ENCODE measurements at regions of chr11 and their contacts with region 1.

Region 1: DNA sequence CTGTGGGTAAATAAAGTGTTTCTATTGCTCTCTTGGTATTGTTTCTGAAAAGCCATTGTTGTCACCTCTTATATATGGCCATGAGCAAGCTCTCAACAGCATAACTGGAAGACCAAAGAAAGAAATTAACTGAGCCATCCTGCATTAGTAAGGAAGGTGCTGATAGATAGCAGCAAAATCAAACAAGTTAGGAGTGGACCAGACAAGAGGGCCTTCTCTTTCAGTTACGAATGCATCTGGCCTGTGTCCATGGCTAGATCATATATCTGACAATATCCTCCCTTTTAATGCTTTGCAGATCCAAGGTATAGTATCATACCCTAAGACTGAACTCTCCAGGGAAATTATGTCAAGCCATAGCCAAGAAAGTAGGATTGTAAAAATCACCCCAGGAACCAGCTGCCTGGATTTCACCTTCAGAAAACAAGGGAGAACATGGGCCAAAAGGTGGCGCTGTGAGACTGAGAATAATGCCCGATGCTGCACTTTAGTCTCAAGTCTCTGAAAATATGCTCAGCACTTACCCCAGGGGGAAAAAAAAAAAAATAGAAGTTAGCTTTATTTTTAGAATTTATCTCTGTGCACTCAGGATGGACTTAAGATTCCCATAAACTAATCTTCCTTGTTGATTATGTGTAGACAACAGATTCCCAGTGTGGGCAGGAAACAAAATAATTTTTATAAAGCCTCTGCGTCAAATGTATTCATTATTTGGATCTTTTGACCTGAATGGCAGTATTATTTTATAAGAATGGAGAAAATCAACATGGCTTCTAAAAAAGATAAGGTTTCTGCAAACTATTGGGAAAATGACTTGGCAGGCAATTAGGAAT is 415.1 kb downstream of the ETS1 start:
- DNase-seq: peak; percentile 14 to 73 (median 30)
- ATAC-seq: peak; percentile 88
- H3K4me3 ChIP-seq: no peak overlapping the region
- H3K27ac ChIP-seq: no peak overlapping the region
- H3K4me1 ChIP-seq: no peaks in the 10 kb centered on the region
- H3K27me3 ChIP-seq: no peaks in the 10 kb centered on the region
- CTCF ChIP-seq: peak; percentile 65 to 81 (median 66)
- EP300 ChIP-seq: no peak
- POLR2A ChIP-seq: no peak
- RAD21 ChIP-seq: peak; percentile 75 to 76

Region 2: GRCh38 chr11:127962416-127962815 is 209.8 kb before region 1 on chr11:
- CTCF ChIA-PET with region 1: no interaction called
- POLR2A ChIA-PET with region 1: no interaction called
- in situ Hi-C with region 1: no loop called
- intact Hi-C with region 1: no loop called
- DNase-seq: no peak
- ATAC-seq: no peak
- H3K4me3 ChIP-seq: no peak overlapping the region
- H3K27ac ChIP-seq: no peak overlapping the region
- H3K4me1 ChIP-seq: no peaks in the 10 kb centered on the region
- H3K27me3 ChIP-seq: no peaks in the 10 kb centered on the region
- CTCF ChIP-seq: no peak
- EP300 ChIP-seq: no peak
- POLR2A ChIP-seq: no peak
- RAD21 ChIP-seq: no peak

Region 3: GRCh38 chr11:128052912-128053641 is 119.2 kb before region 1 on chr11:
- CTCF ChIA-PET with region 1: no interaction called
- POLR2A ChIA-PET with region 1: no interaction called
- in situ Hi-C with region 1: no loop called
- intact Hi-C with region 1: no loop called
- DNase-seq: no peak
- ATAC-seq: no peak
- H3K4me3 ChIP-seq: no peak overlapping the region
- H3K27ac ChIP-seq: no peak overlapping the region
- H3K4me1 ChIP-seq: no peaks in the 10 kb centered on the region
- H3K27me3 ChIP-seq: no peaks in the 10 kb centered on the region
- CTCF ChIP-seq: no peak
- EP300 ChIP-seq: no peak
- POLR2A ChIP-seq: no peak
- RAD21 ChIP-seq: no peak

Region 4: DNA sequence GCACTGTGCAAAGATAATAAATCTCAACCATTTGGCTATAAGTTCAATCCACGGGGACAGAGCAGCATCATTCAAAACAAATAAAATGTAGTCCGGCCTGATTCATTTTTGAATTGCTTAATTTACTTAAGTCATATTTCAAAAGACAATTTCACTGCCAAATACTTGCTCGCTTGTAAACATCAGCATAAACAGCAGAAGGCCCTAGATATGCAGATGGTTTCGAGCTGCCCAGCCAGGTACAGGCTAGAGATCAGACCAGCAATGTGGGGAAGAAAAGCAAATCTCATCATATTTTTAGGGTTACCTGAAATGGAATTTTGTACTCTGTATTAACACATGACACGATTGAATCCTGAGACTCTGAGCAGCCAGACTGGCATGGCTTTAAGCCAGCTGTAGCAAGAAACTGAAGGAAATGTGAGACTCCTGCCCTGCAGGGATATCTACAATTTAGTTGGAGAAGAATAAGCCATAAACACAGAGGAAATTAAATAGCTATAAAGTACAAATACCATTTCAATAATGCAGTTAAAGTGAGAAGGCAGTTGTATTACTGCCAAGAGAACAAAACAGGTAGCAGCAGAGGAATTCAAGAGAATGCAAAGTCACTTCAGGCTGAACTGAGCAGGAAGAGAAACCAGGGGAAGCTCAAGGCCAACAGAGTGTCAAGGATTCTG is 25.2 kb before region 1 on chr11:
- CTCF ChIA-PET with region 1: no interaction called
- POLR2A ChIA-PET with region 1: no interaction called
- in situ Hi-C with region 1: no loop called
- intact Hi-C with region 1: no loop called
- DNase-seq: no peak
- ATAC-seq: no peak
- H3K4me3 ChIP-seq: no peak overlapping the region
- H3K27ac ChIP-seq: no peak overlapping the region
- H3K4me1 ChIP-seq: no peaks in the 10 kb centered on the region
- H3K27me3 ChIP-seq: no peaks in the 10 kb centered on the region
- CTCF ChIP-seq: no peak
- EP300 ChIP-seq: no peak
- POLR2A ChIP-seq: no peak
- RAD21 ChIP-seq: no peak

Region 5: DNA sequence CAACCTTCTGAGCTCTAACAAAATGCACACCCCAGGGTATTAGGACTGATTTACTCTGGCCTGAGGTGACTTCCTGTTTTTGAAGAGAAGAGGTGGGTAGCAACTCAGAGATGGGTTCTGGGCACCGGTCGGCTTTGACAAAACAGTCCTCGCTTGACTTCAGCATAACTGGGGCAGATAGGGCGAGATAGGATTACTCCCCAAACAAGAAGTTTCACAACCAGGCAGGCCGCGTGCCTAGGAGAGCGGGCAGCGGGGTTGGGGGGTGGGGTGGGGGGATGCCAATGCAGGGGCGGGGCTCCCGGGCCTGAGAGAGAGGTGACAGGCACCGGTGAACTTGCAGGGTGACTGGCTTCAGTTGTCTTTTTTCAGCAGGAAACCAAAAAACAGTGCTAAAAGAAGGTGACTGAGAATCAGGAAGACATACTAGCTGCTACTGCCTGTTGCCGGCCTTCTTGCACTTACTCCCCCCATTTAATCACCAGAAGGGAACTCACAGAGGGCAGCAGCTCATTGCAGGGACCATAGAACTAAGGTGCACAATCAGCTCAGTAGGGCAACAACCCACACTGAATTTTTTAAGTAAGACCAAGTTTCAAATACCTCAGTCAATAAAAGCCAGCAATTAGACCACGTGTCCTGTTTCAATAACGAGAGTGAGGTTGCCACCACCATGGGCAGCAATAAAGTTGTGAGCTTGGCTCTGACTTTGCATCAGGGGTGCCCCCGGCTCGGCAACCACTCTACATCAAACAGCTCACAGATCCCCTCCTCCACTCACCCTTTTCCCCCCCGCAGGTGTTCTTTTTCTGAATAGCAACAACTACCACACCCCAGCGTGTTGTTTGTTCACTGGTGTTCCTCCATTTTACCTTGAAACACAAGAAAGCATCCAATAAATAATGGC is 452.3 kb after region 1 on chr11:
- CTCF ChIA-PET with region 1: no interaction called
- POLR2A ChIA-PET with region 1: no interaction called
- in situ Hi-C with region 1: loop called (anchors 10 kb)
- intact Hi-C with region 1: no loop called
- DNase-seq: no peak
- ATAC-seq: no peak
- H3K4me3 ChIP-seq: no peak overlapping the region
- H3K27ac ChIP-seq: no peak overlapping the region
- H3K4me1 ChIP-seq: peaks cover 0 to 6% of the 10 kb centered on the region in 2 experiments; a peak in 2 of 5 replicates
- H3K27me3 ChIP-seq: no peaks in the 10 kb centered on the region
- CTCF ChIP-seq: no peak
- EP300 ChIP-seq: no peak
- POLR2A ChIP-seq: no peak
- RAD21 ChIP-seq: no peak

Region 6: DNA sequence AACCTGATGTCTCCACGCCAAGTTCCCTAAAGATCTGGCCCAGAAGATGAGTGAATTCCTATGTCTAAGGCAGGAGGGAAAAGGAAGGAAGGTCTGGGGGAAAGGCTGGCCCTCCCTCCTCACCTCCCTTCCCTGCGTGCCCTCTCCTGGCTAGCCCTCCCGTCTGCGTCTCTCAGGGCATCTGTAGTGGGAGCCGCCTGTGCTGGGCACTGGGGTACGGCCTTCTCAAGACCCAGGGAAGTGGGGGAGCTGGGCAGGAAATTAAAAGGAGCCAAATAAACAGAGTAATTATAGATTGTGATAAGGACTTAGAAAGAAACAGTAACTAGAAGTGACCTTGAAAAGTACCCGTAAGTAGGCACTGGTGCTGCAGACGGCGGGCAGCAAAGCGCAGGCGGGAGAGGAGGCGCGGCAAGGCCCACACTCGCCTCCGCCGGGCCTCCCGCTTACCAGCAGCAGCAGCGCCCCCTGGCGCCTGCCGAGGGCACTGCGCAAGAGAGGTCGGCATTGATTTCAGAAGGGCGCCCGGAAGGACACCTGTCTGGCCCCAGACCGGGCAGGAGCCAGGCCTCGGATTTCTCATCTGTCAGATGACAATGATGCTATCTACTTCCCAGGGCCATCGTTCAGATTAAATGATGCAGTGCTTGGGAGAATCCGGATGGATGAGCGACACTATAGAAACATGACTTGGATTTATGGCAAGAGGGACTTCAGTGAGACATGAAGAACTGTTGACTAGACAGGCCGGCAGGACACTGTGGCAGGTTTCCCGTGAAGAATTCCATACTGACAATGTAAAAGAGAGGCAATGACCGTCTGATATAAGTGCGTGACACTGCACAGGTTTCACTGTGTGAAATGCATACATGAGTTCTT is 687.5 kb after region 1 on chr11:
- CTCF ChIA-PET with region 1: interaction called, 3 read pairs
- POLR2A ChIA-PET with region 1: no interaction called
- in situ Hi-C with region 1: no loop called
- intact Hi-C with region 1: loop called (anchors 5 kb)
- DNase-seq: peak; percentile 61 to 74 (median 70)
- ATAC-seq: peak; percentile 99
- H3K4me3 ChIP-seq: no peak overlapping the region
- H3K27ac ChIP-seq: no peak overlapping the region
- H3K4me1 ChIP-seq: peaks cover 0 to 4% of the 10 kb centered on the region in 2 experiments; a peak in 2 of 5 replicates
- H3K27me3 ChIP-seq: peaks cover 0 to 3% of the 10 kb centered on the region in 2 experiments; a peak in 1 of 5 replicates
- CTCF ChIP-seq: peak; percentile 80 to 84 (median 81)
- EP300 ChIP-seq: no peak
- POLR2A ChIP-seq: no peak
- RAD21 ChIP-seq: peak; percentile 50 to 65; a peak in 3 of 4 replicates